AG04449 (cell line): ENCODE measurements at regions of chr4 and their contacts with region 1.

Region 1: GRCh38 chr4:122930862-122931261 is 8.5 kb upstream of the NUDT6 start:
- DNase-seq: no peak
- H3K4me3 ChIP-seq: no peak overlapping the region
- CTCF ChIP-seq: no peak

Region 2: GRCh38 chr4:122612540-122612939 is 318.3 kb before region 1 on chr4:
- CTCF ChIA-PET with region 1: interaction called, 10 read pairs
- POLR2A ChIA-PET with region 1: no interaction called
- DNase-seq: no peak
- H3K4me3 ChIP-seq: no peak overlapping the region
- CTCF ChIP-seq: no peak

Region 3: GRCh38 chr4:122732329-122733026 is 198.4 kb before region 1 on chr4 and contains the start of gene BBS12:
- CTCF ChIA-PET with region 1: interaction called, 28 read pairs
- POLR2A ChIA-PET with region 1: no interaction called
- DNase-seq: peak; percentile 95
- H3K4me3 ChIP-seq: peak within 1 kb of the TSS; percentile 82
- CTCF ChIP-seq: peak; percentile 74